ENCODE measurements at regions of chr17 and their contacts with region 1.

Region 1: GRCh38 chr17:50094753-50095619 is at the start of gene PDK2:
- DNase-seq: peak; percentile 97
- H3K4me3 Mint-ChIP-seq: peak within 1 kb of the TSS; percentile 82
- H3K27ac Mint-ChIP-seq: peak within 1 kb of the TSS; percentile 83
- H3K4me1 Mint-ChIP-seq: peaks cover 17% of the 10 kb centered on the region
- H3K27me3 Mint-ChIP-seq: no peaks in the 10 kb centered on the region
- total RNA-seq, gene PDK2: 13.3 to 14.6 TPM

Region 2: GRCh38 chr17:50026901-50027630 is 67.9 kb before region 1 on chr17:
- CTCF ChIA-PET with region 1: interaction called, 89 read pairs
- POLR2A ChIA-PET with region 1: no interaction called
- intact Hi-C with region 1: no loop called
- DNase-seq: peak; percentile 87
- H3K4me3 Mint-ChIP-seq: peak overlapping the region; percentile 44
- H3K27ac Mint-ChIP-seq: no peak overlapping the region
- H3K4me1 Mint-ChIP-seq: peaks cover 6% of the 10 kb centered on the region
- H3K27me3 Mint-ChIP-seq: peaks cover 26% of the 10 kb centered on the region

Region 3: GRCh38 chr17:50079334-50080095 is 15.5 kb before region 1 on chr17:
- CTCF ChIA-PET with region 1: interaction called, 40 read pairs
- POLR2A ChIA-PET with region 1: no interaction called
- intact Hi-C with region 1: no loop called
- DNase-seq: peak; percentile 56
- H3K4me3 Mint-ChIP-seq: no peak overlapping the region
- H3K27ac Mint-ChIP-seq: no peak overlapping the region
- H3K4me1 Mint-ChIP-seq: no peaks in the 10 kb centered on the region
- H3K27me3 Mint-ChIP-seq: no peaks in the 10 kb centered on the region

Region 4: DNA sequence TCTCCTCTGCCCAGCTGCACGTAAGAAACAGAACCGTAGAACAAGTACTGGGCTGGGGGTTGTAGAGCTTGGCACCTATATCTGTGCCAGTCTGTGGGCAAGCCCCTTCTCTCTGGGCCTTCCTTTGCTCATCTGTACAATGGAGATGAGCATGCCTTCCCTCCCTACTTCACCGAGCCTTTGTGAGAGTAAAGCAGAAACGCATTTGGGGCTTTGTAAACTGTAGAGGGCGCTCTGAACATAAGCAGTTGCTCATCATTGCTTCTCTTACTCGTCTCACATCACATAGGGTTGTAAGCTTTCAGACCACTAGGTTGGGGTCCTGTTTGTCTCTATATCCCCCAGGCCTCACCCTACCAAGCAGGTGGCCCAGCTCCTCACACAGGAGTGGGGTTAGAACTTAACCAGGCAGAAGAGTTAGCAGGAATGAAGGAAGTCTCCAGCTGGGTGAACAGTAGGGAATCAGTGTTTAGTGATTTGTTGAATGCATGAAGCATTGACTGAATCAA is 19.9 kb after region 1 on chr17:
- CTCF ChIA-PET with region 1: interaction called, 18 read pairs
- POLR2A ChIA-PET with region 1: no interaction called
- intact Hi-C with region 1: no loop called
- DNase-seq: peak; percentile 53
- H3K4me3 Mint-ChIP-seq: no peak overlapping the region
- H3K27ac Mint-ChIP-seq: no peak overlapping the region
- H3K4me1 Mint-ChIP-seq: peaks cover 10% of the 10 kb centered on the region
- H3K27me3 Mint-ChIP-seq: peaks cover 24% of the 10 kb centered on the region

Region 5: DNA sequence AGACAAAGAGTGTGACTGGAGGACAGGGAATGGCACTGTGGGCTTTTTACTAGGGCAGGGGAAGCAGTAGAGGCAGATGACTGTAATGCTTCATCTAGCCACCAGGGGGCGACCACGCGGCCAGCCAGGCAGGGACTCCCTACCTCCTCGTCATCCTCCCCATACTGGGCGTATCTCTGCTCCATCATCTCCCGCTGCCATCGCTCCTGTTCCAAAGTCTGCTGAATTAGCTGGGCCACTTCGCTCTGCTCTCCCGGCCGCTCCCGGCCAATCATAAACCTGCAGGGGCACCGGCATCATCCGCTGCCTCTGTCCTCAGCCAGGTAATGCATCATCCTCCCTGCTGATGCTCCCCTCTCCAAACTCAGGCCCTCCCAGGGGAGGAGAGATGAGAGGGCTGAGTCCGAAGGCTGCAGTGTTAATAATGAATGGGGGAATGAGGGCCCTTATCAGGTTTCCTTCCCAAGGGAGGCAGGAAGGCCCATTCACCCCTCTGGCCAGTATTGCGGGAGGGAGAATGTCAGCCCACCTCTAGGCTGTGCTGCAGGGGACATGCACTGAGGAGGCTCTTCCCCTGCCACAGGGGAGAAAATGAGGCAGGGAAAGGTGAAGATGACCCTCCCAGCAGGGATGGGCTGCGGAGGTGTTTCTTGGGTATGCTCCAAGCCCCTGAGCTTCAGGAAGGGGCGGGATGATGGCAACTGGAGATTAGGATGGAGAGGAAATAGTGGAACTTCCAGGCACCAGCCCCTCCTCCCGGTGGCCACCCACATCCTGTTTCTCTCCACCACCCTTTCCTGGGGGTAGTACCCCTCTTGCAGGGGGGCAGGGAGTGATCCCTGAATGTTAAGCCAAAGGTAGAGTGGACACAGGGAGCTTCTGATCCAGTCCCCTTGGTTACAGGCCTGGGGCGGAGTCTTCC is 45.2 kb after region 1 on chr17:
- CTCF ChIA-PET with region 1: interaction called, 15 read pairs
- POLR2A ChIA-PET with region 1: interaction called, 4 read pairs
- intact Hi-C with region 1: no loop called
- DNase-seq: peak; percentile 89
- H3K4me3 Mint-ChIP-seq: peak overlapping the region; percentile 55
- H3K27ac Mint-ChIP-seq: peak overlapping the region; percentile 77
- H3K4me1 Mint-ChIP-seq: peaks cover 58% of the 10 kb centered on the region
- H3K27me3 Mint-ChIP-seq: no peaks in the 10 kb centered on the region

Region 6: GRCh38 chr17:50161023-50161910 is 66.3 kb after region 1 on chr17:
- CTCF ChIA-PET with region 1: interaction called, 33 read pairs
- POLR2A ChIA-PET with region 1: no interaction called
- intact Hi-C with region 1: loop called (anchors 1 kb)
- DNase-seq: peak; percentile 98
- H3K4me3 Mint-ChIP-seq: peak overlapping the region; percentile 79
- H3K27ac Mint-ChIP-seq: peak overlapping the region; percentile 91
- H3K4me1 Mint-ChIP-seq: peaks cover 33% of the 10 kb centered on the region
- H3K27me3 Mint-ChIP-seq: no peaks in the 10 kb centered on the region

Region 7: DNA sequence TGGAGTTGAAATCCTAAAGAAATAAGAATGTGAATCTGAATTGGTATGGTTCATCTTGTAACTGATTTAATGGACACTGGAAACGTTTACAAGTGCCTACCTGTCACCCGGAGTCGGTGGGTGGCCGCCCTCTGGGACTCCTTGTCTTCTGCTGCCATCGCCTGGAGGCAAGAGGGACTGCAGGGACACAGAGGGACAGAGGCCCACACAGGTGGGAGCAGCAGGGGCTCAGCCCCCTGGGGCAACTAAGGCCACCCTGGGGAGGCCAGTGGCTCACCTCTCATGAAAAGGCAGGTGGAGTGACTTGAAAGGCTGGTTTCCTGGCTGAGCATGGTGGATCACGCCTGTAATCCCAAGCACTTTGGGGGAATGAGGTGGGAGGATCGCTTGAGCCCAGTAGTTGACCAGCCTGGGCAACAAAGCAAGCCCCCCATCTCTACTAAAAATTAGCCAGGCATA is 202.4 kb after region 1 on chr17:
- CTCF ChIA-PET with region 1: interaction called, 40 read pairs
- POLR2A ChIA-PET with region 1: no interaction called
- intact Hi-C with region 1: loop called (anchors 2 kb)
- DNase-seq: peak; percentile 90
- H3K4me3 Mint-ChIP-seq: no peak overlapping the region
- H3K27ac Mint-ChIP-seq: no peak overlapping the region
- H3K4me1 Mint-ChIP-seq: peaks cover 8% of the 10 kb centered on the region
- H3K27me3 Mint-ChIP-seq: peaks cover 15% of the 10 kb centered on the region

Measured in activated CD4-positive, alpha-beta memory T cell treated with anti-CD3 and anti-CD28 coated beads for 36 hours (primary cell).